GM10248 (cell line): ENCODE measurements at regions of chr3 and their contacts with region 1.

Region 1: DNA sequence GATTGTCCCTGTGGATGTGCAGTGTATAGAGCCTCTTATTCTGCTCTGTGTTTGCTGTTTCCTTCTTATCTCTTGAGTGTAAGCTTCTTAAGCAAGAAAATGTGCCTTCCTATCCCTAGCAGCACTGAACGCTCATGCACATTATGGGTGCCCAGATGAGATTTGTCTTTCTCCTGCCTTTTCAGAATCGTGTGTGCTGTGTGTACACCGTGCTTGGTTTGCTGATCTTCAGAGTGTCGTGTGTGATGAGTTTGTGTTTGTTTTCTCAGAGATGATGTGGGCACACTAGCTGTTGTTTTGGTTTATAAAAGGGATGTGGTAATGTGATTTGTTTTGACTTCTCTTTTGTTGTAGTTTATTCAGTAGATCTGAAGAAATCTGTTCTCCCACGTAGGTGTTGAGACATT is 19.7 kb downstream of the GPR171 start:
- DNase-seq: no peak
- CTCF ChIP-seq: no peak

Region 2: GRCh38 chr3:151086484-151087456 is 96.5 kb before region 1 on chr3:
- CTCF ChIA-PET with region 1: no interaction called
- POLR2A ChIA-PET with region 1: no interaction called
- DNase-seq: peak; percentile 75
- CTCF ChIP-seq: peak; percentile 49

Region 3: GRCh38 chr3:151203051-151203420 is 19.8 kb after region 1 on chr3 and contains the start of gene GPR171:
- CTCF ChIA-PET with region 1: interaction called, 21 read pairs
- POLR2A ChIA-PET with region 1: no interaction called
- DNase-seq: peak; percentile 38
- CTCF ChIP-seq: no peak